Caco-2 (cell line): ENCODE measurements at regions of chr13 and their contacts with region 1.

Region 1: GRCh38 chr13:112873851-112874750 is 94.9 kb upstream of the MCF2L start:
- DNase-seq: peak; percentile 82 to 87
- H3K4me3 ChIP-seq: no peak overlapping the region
- H3K4me3 Mint-ChIP-seq: no peak overlapping the region
- H3K27ac Mint-ChIP-seq: peak overlapping the region; percentile 26
- H3K4me1 ChIP-seq: peaks cover 9% of the 10 kb centered on the region; the same call in 1 of the 2 replicates
- H3K4me1 Mint-ChIP-seq: peaks cover 15% of the 10 kb centered on the region
- H3K27me3 ChIP-seq: no peaks in the 10 kb centered on the region
- H3K27me3 Mint-ChIP-seq: no peaks in the 10 kb centered on the region
- CTCF ChIP-seq: peak; percentile 94 to 97

Region 2: GRCh38 chr13:112711528-112712265 is 162.4 kb before region 1 on chr13:
- CTCF ChIA-PET with region 1: no interaction called
- POLR2A ChIA-PET with region 1: no interaction called
- intact Hi-C with region 1: loop called (anchors 10 kb)
- DNase-seq: peak; percentile 88 to 94
- H3K4me3 ChIP-seq: peak overlapping the region; percentile 23
- H3K4me3 Mint-ChIP-seq: peak overlapping the region; percentile 73
- H3K27ac Mint-ChIP-seq: peak overlapping the region; percentile 89
- H3K4me1 ChIP-seq: peaks cover 70% of the 10 kb centered on the region
- H3K4me1 Mint-ChIP-seq: peaks cover 57% of the 10 kb centered on the region
- H3K27me3 ChIP-seq: no peaks in the 10 kb centered on the region
- H3K27me3 Mint-ChIP-seq: no peaks in the 10 kb centered on the region
- CTCF ChIP-seq: peak; percentile 36 to 69